ENCODE measurements at regions of chr2 and their contacts with region 1.

Region 1: GRCh38 chr2:179037807-179038206 is 12.1 kb downstream of the CCDC141 start:
- DNase-seq: no peak
- H3K4me3 ChIP-seq: no peak overlapping the region
- H3K27ac ChIP-seq: no peak overlapping the region
- H3K4me1 ChIP-seq: no peaks in the 10 kb centered on the region
- H3K27me3 ChIP-seq: no peaks in the 10 kb centered on the region
- CTCF ChIP-seq: no peak

Region 2: GRCh38 chr2:179255129-179255528 is 217.3 kb after region 1 on chr2:
- CTCF ChIA-PET with region 1: no interaction called
- POLR2A ChIA-PET with region 1: interaction called, 32 read pairs
- intact Hi-C with region 1: no loop called
- DNase-seq: no peak
- H3K4me3 ChIP-seq: no peak overlapping the region
- H3K27ac ChIP-seq: no peak overlapping the region
- H3K4me1 ChIP-seq: no peaks in the 10 kb centered on the region
- H3K27me3 ChIP-seq: no peaks in the 10 kb centered on the region
- CTCF ChIP-seq: no peak